ENCODE measurements at regions of chr3 and their contacts with region 1.

Region 1: DNA sequence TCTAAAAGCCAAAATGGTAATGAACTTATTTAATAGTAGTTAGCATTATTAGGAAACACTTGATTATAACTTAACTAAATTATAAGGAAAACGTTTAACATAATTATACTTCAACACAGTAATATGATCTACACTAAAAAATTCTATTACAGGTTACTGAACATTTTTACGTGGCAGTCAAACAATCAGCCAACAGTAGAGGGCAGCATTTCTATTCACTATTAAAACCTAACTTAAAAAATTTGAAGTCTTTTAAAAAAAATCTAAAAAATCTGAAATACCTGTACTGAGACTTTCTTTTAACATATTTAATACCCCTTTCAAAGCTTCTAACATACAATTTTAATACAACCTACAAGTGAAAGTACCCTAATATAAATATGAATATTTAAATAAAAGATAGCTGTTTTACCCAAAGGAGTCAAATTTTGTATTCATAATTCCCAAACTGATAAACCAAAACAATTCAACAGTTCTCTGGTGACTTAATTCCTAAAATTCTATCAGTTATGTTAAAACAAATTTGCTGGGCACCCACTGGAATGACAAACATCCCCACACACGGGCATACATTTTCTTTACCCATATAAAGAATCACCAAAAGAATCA is 41.5 kb downstream of the DLG1 start:
- DNase-seq: no peak
- ATAC-seq: no peak

Region 2: GRCh38 chr3:197189633-197190032 is 67.3 kb before region 1 on chr3:
- intact Hi-C with region 1: no loop called
- DNase-seq: no peak
- ATAC-seq: no peak

Region 3: GRCh38 chr3:197305854-197306253 is 48.9 kb after region 1 on chr3:
- intact Hi-C with region 1: no loop called
- DNase-seq: no peak
- ATAC-seq: no peak

Region 4: DNA sequence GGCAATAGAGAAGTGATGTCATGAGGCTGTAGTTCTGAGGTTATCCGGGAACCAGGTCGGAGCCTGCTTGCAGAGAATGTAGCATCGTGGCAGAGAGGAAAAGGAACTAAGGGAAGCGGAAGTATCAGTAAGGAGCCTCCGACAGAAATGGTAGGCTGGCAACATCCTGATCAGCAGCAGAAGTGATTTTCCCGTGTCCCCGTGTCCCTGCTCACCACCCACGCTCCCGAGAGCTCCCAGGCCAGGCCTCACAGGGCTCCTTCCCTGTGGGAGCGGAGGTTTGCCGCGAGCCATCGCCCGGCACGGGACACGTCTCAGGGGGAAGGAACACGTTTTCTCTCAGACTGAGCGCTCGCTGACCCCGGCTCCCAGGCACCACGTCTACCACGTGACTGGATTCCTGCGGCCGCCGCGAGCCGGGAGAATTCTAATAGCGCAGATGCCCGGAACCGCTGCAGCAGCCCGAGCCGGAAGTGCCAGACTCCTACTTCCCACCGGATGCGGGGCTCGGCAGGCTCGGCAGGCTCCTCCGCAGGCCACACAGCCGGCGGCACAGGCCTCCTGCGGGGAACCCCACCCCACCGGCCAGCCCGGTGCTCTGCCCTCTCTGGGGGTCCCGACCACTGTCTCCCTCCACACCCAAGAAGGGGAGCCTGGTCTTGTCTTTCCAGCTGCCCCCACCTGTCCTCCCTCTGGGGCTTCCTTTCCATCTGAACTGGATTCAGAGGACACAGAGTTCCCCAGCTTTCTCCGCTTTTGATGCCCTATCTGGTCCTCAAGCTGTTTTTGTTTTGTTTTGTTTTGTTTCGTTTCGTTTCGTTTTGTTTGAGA is 199.5 kb after region 1 on chr3:
- intact Hi-C with region 1: loop called (anchors 5 kb)
- DNase-seq: peak; percentile 92
- ATAC-seq: peak; percentile 97

Region 5: DNA sequence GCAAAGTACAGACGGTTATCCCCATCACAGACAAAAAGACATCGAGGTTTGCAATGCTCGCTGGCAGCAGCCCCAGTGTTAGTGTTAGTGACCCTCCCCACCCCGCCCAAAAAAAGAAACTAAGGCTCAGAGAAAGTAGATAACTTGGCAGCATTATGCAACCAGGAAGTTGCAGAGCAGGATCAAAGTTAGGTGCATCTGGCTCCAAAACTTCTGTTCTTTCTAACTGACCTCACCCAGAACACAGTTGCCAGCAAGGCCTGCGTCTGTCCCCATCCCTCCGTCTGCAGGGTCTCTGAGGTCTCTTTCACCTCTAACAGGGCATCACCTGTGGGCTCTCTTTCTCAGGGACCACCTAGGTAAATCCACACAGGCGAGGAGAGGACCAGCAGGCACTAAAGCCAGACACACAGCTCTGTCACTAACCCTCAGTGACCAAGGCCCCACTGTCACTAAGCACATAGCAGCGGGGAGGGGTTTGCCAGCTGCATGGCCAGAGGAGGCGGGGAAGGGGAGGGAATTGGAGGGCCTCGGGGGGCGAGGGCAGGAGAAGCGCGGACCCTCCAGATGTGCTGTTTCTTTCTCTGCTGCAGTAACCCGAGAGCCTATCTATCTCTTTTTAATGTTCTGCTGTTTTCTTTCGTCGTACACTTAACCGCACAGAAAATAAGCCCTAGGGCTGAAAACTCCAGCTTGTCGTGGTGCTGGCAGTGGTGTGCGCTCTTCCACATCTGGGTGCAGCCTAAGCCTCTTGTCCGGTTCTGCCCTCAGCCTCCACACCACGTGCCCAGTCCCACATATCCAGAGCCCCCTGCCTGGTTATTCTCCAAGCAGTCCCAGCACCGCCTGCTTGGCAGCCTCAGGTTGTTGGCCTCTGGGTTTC is 247.5 kb after region 1 on chr3:
- intact Hi-C with region 1: loop called (anchors 5 kb)
- DNase-seq: no peak
- ATAC-seq: no peak